ENCODE measurements at regions of chr13 and their contacts with region 1.

Region 1: DNA sequence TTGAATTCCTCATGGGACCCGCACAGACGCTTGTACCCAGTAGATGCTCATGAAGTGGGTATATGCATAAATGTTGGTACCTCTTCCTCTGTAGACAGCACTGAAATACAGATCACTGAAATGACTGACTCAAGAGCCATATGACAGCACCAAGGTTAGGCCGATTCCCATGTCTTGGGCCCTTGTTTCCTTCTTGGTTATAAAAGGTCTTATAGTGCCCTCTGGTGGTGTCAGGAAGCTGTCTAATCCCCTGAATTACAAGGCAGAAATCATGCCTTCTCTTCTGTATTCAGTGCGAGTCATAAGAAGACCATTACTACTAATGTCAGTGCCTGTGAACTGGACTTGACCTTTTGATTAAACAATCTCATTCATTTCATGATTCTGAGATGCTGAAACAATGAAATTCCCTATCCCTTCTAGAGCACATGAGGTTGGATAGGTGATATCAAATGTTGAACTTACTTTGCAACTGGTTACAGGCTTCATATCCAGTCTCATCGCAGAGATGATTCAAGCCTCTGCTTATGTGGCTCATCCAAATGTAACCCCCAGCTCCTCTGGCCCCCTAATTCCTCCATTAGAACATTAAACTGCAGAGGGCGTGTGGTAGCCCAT is 59.7 kb downstream of the SPATA13 start:
- DNase-seq: peak; percentile 34
- ATAC-seq: peak; percentile 83 to 84

Region 2: DNA sequence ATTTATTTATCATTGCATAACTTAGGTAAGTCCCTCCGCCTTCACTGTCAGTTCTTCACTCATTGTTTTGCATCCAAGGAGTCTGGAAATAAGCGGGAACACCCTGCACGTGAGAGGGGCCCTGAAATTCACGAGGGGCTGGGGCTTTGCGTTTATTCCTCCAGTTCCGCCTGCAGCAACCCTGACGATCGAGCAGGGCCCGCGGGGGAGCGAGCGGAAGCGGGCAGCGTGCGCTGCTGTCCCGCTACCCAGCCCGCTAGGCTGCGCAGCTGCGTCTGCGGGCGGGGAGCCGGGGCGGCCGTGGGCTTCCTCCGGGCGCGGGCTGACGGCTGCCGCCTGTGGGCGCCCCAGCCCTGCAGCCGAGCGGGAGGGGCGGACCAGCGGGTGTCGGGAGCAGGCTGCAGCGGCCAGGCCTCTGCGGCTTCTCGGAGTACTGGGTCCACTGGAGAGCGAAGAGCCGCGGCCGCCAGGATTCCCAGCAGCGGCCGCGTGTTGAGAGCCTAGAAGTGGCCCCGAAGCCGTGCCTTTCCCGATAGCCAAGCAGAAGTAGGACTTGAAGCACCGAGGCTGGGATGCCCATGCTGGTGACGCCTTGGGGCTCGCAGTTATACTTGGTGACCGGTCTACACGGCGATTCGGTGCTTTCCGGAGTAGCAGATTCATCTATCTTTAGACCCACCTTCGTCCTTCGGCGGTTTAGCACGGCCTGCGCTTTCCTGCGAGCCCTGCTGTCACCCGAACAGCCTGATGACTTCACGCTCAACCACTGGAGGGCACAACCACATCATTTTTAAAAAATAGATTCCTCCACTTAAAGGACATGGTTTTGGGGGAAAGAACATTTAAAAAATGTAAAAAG is 753.8 kb before region 1 on chr13:
- intact Hi-C with region 1: loop called in 1 of 2 experiments (anchors 10 kb)
- DNase-seq: peak; percentile 77
- ATAC-seq: peak; percentile 94 to 96

Region 3: DNA sequence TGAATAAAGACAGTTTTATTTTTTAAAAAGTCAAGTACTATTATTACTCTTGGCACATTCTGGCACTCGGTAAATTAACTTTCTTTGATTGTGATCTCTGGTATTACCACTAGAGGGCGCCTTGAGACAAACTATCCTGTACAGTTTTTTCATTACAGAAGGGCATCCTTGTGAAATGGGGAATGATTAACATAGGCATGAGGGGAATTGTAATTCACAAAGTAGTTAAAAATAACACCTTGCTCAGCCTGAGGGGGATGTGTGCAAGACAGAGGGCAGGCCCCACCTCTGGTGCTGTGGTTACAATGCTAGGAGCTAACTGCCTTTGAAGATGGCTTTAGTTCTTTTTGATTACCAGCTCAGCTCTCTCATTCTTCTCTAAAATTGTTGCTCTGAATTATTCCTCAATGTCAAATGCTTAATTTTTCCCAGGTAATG is 298.7 kb before region 1 on chr13:
- intact Hi-C with region 1: loop called (anchors 5 kb)
- DNase-seq: no peak
- ATAC-seq: peak in 1 of 2 donors; percentile 38

Region 4: DNA sequence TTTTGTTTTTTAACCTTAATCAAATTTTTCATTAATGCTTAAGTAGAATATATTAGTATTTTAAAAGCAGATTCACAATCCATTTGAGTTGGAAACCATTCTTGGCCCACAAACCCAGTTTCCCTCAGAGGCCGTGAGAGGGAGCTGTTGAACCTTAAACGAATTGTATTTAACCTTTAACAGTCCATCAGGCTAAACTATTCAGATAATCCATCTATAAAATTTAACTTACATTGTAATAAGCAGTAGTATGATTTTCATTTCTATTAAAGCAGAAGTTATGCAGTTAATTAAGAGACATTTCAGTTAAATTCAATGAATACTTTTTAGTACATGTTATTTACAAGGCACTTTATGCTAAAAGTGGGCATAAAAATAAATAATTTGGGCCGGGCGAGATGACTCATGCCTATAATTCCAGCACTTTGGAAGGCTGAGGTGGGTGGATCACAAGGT is 199.8 kb before region 1 on chr13:
- intact Hi-C with region 1: loop called (anchors 2 to 10 kb)
- DNase-seq: peak; percentile 42
- ATAC-seq: peak; percentile 57 to 61

Region 5: DNA sequence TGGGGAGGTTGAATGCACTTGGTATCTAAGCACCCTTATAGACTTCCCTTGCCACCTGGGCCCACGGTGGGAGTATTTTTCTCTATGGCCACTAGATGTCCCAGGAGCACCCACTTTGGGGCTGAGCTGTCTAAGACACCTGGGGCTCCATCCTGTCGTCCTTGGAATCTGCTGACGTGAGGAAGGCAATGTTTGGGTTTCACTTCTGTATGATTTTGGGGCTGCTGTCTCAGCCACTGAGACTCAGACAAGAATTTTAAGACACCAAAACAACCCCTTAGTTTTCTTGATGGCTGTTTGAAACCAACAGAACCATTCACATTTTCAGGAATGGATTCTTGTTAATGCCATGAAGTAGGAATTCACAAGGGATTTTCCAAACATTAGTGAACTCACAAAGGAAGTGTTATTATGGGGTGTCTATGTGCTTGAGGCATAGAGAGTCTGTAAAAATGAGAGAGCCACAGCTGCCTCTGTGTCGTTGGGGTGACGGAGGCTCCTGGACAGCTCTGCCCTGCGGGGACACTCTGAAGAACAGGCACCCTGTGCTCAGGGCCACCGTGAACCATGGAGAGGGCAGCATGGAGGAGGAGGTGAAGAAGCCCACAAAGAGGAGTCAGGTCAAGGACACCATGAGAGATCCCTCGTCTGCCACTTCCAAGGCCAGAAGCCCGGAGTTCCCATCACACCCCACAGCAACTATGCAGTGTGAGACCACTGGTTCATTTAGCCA is 166.5 kb before region 1 on chr13:
- intact Hi-C with region 1: loop called (anchors 1 to 5 kb)
- DNase-seq: peak; percentile 42
- ATAC-seq: peak; percentile 68 to 81

Region 6: DNA sequence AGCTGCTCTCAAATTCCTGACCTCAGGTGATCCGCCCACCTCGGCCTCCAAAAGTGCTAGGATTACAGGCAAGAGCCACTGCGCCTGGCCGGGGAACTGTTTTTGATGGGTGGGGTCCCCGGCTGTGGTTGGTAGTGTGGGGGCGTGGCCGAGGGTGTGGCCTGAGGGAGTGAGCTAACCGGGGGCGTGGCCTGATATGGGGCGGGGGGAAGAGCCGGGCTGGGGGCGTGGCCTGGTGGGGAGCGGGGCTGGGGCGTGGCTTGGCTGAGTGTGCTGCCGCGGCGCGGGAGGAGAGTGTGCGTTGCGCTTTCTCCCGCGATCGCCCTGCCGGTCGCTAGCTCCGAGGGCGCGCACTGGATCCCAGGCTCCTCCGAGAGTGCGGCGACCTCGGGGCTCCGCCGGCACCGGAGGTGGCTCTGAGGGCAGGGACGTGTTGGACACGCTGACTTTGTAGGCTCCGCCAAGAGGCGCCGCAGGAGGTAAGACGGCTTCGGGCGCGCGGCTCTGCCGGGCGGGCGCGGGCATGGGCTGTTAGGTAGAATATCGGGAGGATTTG is 59.7 kb before region 1 on chr13 and contains the start of gene SPATA13:
- intact Hi-C with region 1: no loop called
- DNase-seq: peak; percentile 96
- ATAC-seq: peak; percentile 98 to 99
- total RNA-seq, gene SPATA13: 9.0 to 11.2 TPM

Measured in left cardiac atrium (tissue), 4 donors.